CD4-positive, alpha-beta T cell (primary cell): ENCODE measurements at regions of chr14 and their contacts with region 1.

Region 1: GRCh38 chr14:100239840-100240724 is 1.1 kb downstream of the YY1 start:
- DNase-seq: peak; percentile 65 to 95 (median 84)
- ATAC-seq: peak; percentile 47
- H3K4me3 ChIP-seq: peak overlapping the region; percentile 78
- H3K4me3 Mint-ChIP-seq: peak overlapping the region; percentile 97
- H3K27ac ChIP-seq: peak overlapping the region; percentile 82 to 86
- H3K27ac Mint-ChIP-seq: peak overlapping the region; percentile 98
- H3K4me1 ChIP-seq: peaks cover 54% of the 10 kb centered on the region
- H3K4me1 Mint-ChIP-seq: peaks cover 63% of the 10 kb centered on the region
- H3K27me3 ChIP-seq: no peaks in the 10 kb centered on the region
- H3K27me3 Mint-ChIP-seq: no peaks in the 10 kb centered on the region
- CTCF ChIP-seq: peak; percentile 30

Region 2: DNA sequence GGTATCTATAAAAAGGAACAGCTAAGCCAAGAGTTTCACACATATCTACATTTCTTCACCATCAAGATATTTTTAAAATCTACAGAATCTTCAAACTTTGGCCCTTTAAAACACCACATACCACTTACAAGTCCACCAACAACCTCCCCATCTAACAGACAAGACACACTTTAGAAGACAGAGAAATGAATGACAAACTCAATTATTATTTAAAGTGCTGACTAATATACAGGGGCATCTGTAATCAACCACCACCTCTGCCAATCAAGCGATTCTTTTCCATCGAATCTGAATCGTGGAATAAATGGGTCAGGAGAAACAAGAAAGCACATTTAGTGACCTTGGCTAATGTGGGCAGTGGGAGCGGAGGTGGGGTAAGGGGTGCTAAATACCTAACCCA is 767.1 kb before region 1 on chr14:
- CTCF ChIA-PET with region 1: no interaction called
- POLR2A ChIA-PET with region 1: no interaction called
- intact Hi-C with region 1: no loop called
- DNase-seq: no peak
- ATAC-seq: no peak
- H3K4me3 ChIP-seq: no peak overlapping the region
- H3K4me3 Mint-ChIP-seq: no peak overlapping the region
- H3K27ac ChIP-seq: no peak overlapping the region
- H3K27ac Mint-ChIP-seq: no peak overlapping the region
- H3K4me1 ChIP-seq: peaks cover 9% of the 10 kb centered on the region
- H3K4me1 Mint-ChIP-seq: peaks cover 62% of the 10 kb centered on the region
- H3K27me3 ChIP-seq: no peaks in the 10 kb centered on the region
- H3K27me3 Mint-ChIP-seq: no peaks in the 10 kb centered on the region
- CTCF ChIP-seq: no peak

Region 3: GRCh38 chr14:99604283-99604765 is 635.8 kb before region 1 on chr14:
- CTCF ChIA-PET with region 1: no interaction called
- POLR2A ChIA-PET with region 1: interaction called, 4 read pairs
- intact Hi-C with region 1: loop called in 1 of 2 experiments (anchors 5 kb)
- DNase-seq: peak; percentile 89 to 98 (median 96)
- ATAC-seq: peak; percentile 91
- H3K4me3 ChIP-seq: peak overlapping the region; percentile 88
- H3K4me3 Mint-ChIP-seq: peak overlapping the region; percentile 88
- H3K27ac ChIP-seq: peak overlapping the region; percentile 66 to 77
- H3K27ac Mint-ChIP-seq: peak overlapping the region; percentile 85
- H3K4me1 ChIP-seq: peaks cover 50% of the 10 kb centered on the region
- H3K4me1 Mint-ChIP-seq: peaks cover 47% of the 10 kb centered on the region
- H3K27me3 ChIP-seq: no peaks in the 10 kb centered on the region
- H3K27me3 Mint-ChIP-seq: no peaks in the 10 kb centered on the region
- CTCF ChIP-seq: no peak

Region 4: GRCh38 chr14:99971087-99971940 is 268.8 kb before region 1 on chr14:
- CTCF ChIA-PET with region 1: no interaction called
- POLR2A ChIA-PET with region 1: interaction called, 5 read pairs
- intact Hi-C with region 1: loop called in 1 of 2 experiments (anchors 5 kb)
- DNase-seq: peak; percentile 70 to 92 (median 76)
- ATAC-seq: peak; percentile 88
- H3K4me3 ChIP-seq: peak overlapping the region; percentile 24
- H3K4me3 Mint-ChIP-seq: peak overlapping the region; percentile 86
- H3K27ac ChIP-seq: no peak overlapping the region
- H3K27ac Mint-ChIP-seq: no peak overlapping the region
- H3K4me1 ChIP-seq: peaks cover 12% of the 10 kb centered on the region
- H3K4me1 Mint-ChIP-seq: peaks cover 26% of the 10 kb centered on the region
- H3K27me3 ChIP-seq: peaks cover 0 to 3% of the 10 kb centered on the region in 2 experiments
- H3K27me3 Mint-ChIP-seq: peaks cover 21% of the 10 kb centered on the region
- CTCF ChIP-seq: no peak

Region 5: GRCh38 chr14:100117633-100118395 is 122.3 kb before region 1 on chr14:
- CTCF ChIA-PET with region 1: no interaction called
- POLR2A ChIA-PET with region 1: no interaction called
- intact Hi-C with region 1: no loop called
- DNase-seq: no peak
- ATAC-seq: no peak
- H3K4me3 ChIP-seq: no peak overlapping the region
- H3K4me3 Mint-ChIP-seq: peak overlapping the region; percentile 42
- H3K27ac ChIP-seq: peak overlapping the region; percentile 20 to 37
- H3K27ac Mint-ChIP-seq: peak overlapping the region; percentile 72
- H3K4me1 ChIP-seq: peaks cover 38% of the 10 kb centered on the region
- H3K4me1 Mint-ChIP-seq: peaks cover 41% of the 10 kb centered on the region
- H3K27me3 ChIP-seq: no peaks in the 10 kb centered on the region
- H3K27me3 Mint-ChIP-seq: no peaks in the 10 kb centered on the region
- CTCF ChIP-seq: no peak

Region 6: DNA sequence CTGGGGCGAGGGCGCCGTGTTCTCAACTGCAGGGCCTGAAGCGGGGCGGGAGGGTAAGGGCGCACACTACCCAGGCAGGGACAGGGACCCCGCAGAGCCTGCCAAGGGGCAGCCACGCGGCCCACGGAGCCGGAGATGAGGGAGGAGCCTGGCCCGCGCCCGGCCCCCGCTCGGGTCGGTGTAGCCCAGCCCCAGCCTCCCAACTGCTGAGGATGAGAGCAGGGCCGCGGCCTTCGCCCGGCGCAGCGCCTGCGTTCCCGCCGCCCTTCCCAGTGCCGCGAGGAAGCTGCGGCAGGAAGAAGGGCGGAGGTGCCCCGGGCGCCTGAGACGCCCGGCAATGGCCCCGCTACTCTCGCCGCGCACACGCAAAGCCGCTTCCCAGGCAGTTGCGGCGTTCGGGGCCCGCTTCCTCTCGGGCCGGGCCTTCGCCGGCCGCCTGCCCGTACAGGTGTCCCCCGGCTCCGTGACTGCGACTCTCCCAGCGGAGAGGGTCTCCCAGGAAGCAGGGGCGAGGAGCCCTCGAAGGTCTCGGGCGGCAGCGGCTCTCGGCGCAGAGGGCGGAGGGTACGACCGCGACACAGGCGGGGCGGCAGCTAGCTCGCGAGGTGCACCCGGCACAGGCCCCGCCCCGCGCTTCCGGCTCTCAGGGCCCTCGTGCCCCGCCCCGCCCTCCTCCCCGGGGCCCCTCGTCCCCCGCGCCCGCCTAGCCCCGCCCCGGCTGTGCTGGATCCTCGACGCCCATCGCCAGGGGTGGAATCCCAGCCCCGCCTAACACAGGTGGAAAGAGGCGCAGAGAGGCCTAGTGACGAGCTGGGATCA is 25.9 kb before region 1 on chr14:
- CTCF ChIA-PET with region 1: interaction called, 3 read pairs
- POLR2A ChIA-PET with region 1: interaction called, 32 read pairs
- intact Hi-C with region 1: loop called (anchors 1 to 5 kb)
- DNase-seq: peak; percentile 83 to 98 (median 92)
- ATAC-seq: peak; percentile 96
- H3K4me3 ChIP-seq: peak overlapping the region; percentile 66
- H3K4me3 Mint-ChIP-seq: peak overlapping the region; percentile 89
- H3K27ac ChIP-seq: peak overlapping the region; percentile 79 to 89
- H3K27ac Mint-ChIP-seq: peak overlapping the region; percentile 91
- H3K4me1 ChIP-seq: peaks cover 32% of the 10 kb centered on the region
- H3K4me1 Mint-ChIP-seq: peaks cover 32% of the 10 kb centered on the region
- H3K27me3 ChIP-seq: no peaks in the 10 kb centered on the region
- H3K27me3 Mint-ChIP-seq: no peaks in the 10 kb centered on the region
- CTCF ChIP-seq: no peak

Region 7: GRCh38 chr14:100285021-100285912 is 45.2 kb after region 1 on chr14:
- CTCF ChIA-PET with region 1: interaction called, 9 read pairs
- POLR2A ChIA-PET with region 1: interaction called, 4 read pairs
- intact Hi-C with region 1: loop called (anchors 2 kb)
- DNase-seq: peak; percentile 60 to 91 (median 76)
- ATAC-seq: peak; percentile 92
- H3K4me3 ChIP-seq: peak overlapping the region; percentile 59
- H3K4me3 Mint-ChIP-seq: peak overlapping the region; percentile 80
- H3K27ac ChIP-seq: peak overlapping the region in 1 of 2 donors; percentile 79
- H3K27ac Mint-ChIP-seq: peak overlapping the region; percentile 42
- H3K4me1 ChIP-seq: peaks cover 15% of the 10 kb centered on the region
- H3K4me1 Mint-ChIP-seq: no peaks in the 10 kb centered on the region
- H3K27me3 ChIP-seq: no peaks in the 10 kb centered on the region
- H3K27me3 Mint-ChIP-seq: no peaks in the 10 kb centered on the region
- CTCF ChIP-seq: peak; percentile 96

Region 8: GRCh38 chr14:101151226-101151926 is 911.3 kb after region 1 on chr14:
- CTCF ChIA-PET with region 1: no interaction called
- POLR2A ChIA-PET with region 1: no interaction called
- intact Hi-C with region 1: no loop called
- DNase-seq: no peak
- ATAC-seq: no peak
- H3K4me3 ChIP-seq: no peak overlapping the region
- H3K4me3 Mint-ChIP-seq: no peak overlapping the region
- H3K27ac ChIP-seq: no peak overlapping the region
- H3K27ac Mint-ChIP-seq: no peak overlapping the region
- H3K4me1 ChIP-seq: no peaks in the 10 kb centered on the region
- H3K4me1 Mint-ChIP-seq: no peaks in the 10 kb centered on the region
- H3K27me3 ChIP-seq: peaks cover 5 to 11% of the 10 kb centered on the region in 2 experiments
- H3K27me3 Mint-ChIP-seq: peaks cover 33% of the 10 kb centered on the region
- CTCF ChIP-seq: no peak